Activated CD8-positive, alpha-beta memory T cell treated with anti-CD3 and anti-CD28 coated beads, Interleukin-2, amount 10 ng/mL, durations not matched to agents 7 days and 5 days (primary cell): ENCODE measurements at regions of chr22 and their contacts with region 1.

Region 1: GRCh38 chr22:23849009-23850006 is 8.4 kb upstream of the SLC2A11 start:
- DNase-seq: peak; percentile 89
- ATAC-seq: peak; percentile 96
- H3K4me3 Mint-ChIP-seq: no peak overlapping the region
- H3K27ac Mint-ChIP-seq: no peak overlapping the region
- H3K4me1 Mint-ChIP-seq: peaks cover 28% of the 10 kb centered on the region
- H3K27me3 Mint-ChIP-seq: peaks cover 14% of the 10 kb centered on the region

Region 2: GRCh38 chr22:23632178-23632577 is 217.1 kb before region 1 on chr22 and contains the start of gene DRICH1:
- CTCF ChIA-PET with region 1: interaction called, 10 read pairs
- DNase-seq: peak; percentile 68
- ATAC-seq: peak; percentile 70
- H3K4me3 Mint-ChIP-seq: no peak within 1 kb of the TSS
- H3K27ac Mint-ChIP-seq: peak within 1 kb of the TSS; percentile 49
- H3K4me1 Mint-ChIP-seq: peaks cover 11% of the 10 kb centered on the region
- H3K27me3 Mint-ChIP-seq: no peaks in the 10 kb centered on the region
- total RNA-seq, gene DRICH1: 0.23 TPM in 1 of 2 experiments, not detected in the other

Region 3: DNA sequence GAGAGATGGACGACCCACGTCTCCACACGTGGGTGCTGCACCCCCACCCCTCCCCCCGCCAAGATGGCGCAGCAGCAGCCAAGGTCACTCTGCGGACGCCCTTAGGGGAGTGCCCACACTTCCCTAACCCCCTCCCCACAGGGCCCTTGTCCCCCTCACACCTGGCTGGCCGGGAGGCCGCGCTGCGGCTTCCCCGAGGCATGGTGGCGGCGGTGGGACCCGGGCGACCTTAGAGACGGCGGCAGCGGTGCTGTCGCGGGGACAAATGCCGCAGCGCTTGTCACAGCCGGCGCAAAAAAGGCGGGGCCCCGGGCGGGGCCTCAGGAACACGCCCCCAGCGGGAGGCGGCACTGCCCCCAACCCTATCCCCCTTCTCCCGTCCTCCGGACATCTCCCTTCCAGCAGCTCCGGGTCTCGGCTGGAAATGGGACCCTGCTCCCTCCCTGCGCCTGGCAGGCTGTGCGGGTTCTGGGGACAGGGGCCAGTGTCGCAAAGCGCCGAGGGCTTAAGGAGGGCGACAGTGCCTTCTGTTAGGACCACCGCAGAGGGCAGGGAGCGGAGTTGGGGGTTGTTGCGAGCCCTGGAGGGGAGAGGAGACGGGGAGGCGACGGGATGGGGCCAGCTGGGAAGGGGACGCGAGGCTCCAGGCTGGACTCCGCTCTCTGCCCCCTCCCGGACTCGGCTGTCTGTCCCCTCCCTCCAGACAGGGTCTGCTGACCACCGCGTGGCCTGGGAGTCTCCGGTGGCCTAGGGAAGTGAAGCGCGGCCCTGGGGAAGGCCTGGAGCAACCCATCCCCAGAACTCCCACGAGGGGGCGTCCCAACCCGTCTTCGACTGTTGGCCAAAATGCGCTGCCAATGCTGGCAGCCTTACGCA is 81.4 kb before region 1 on chr22 and contains the start of gene CHCHD10:
- CTCF ChIA-PET with region 1: interaction called, 95 read pairs
- DNase-seq: peak; percentile 85
- ATAC-seq: peak; percentile 71
- H3K4me3 Mint-ChIP-seq: peak within 1 kb of the TSS; percentile 75
- H3K27ac Mint-ChIP-seq: peak within 1 kb of the TSS; percentile 75
- H3K4me1 Mint-ChIP-seq: peaks cover 53% of the 10 kb centered on the region
- H3K27me3 Mint-ChIP-seq: no peaks in the 10 kb centered on the region
- total RNA-seq, gene CHCHD10: 155 to 159 TPM

Region 4: DNA sequence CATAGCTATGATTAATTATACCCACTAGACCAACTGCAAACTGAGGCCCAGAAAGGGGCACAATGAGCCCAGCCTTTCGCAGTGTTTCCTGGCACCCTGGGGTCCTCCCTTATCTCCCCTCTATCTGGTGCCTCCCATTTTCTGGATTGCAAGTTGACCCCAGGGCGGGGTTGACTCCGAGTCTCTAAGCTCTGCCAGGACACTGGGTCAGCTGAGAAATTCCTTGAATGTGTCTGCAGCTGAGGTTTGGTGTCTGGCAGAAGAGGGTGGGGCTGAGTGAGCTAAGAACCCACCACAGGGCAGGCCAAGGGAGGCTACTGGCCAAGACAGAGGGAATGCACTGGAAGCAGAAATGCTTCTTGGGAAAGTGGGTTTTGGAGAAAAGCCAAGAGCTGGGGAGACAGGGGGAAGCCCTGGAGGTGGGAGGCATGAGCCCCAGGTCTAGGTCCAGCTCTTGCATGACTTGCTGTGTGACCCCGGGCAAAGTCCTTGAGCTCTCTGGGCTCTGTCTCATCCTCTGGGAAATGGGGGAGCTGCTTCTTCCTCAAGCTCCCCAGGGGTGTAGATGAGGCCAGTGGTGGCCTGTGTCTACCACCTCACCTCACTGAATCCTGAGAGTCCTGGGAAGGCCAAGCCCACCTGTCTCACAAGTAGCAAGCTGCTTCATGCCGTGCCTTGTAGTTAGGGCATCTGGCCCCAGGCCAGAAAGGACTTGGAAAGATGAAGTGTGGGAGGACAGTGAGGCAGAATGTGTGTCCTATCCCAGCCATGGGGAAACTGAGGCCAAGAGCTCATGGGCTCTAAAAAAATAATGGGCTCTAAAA is 74.4 kb before region 1 on chr22:
- CTCF ChIA-PET with region 1: interaction called, 95 read pairs
- DNase-seq: no peak
- ATAC-seq: no peak
- H3K4me3 Mint-ChIP-seq: no peak overlapping the region
- H3K27ac Mint-ChIP-seq: no peak overlapping the region
- H3K4me1 Mint-ChIP-seq: peaks cover 18% of the 10 kb centered on the region
- H3K27me3 Mint-ChIP-seq: peaks cover 7% of the 10 kb centered on the region

Region 5: GRCh38 chr22:23820748-23821211 is 28.5 kb before region 1 on chr22:
- CTCF ChIA-PET with region 1: interaction called, 19 read pairs
- DNase-seq: peak; percentile 90
- ATAC-seq: peak; percentile 95
- H3K4me3 Mint-ChIP-seq: peak overlapping the region; percentile 52
- H3K27ac Mint-ChIP-seq: peak overlapping the region; percentile 92
- H3K4me1 Mint-ChIP-seq: peaks cover 59% of the 10 kb centered on the region
- H3K27me3 Mint-ChIP-seq: no peaks in the 10 kb centered on the region

Region 6: DNA sequence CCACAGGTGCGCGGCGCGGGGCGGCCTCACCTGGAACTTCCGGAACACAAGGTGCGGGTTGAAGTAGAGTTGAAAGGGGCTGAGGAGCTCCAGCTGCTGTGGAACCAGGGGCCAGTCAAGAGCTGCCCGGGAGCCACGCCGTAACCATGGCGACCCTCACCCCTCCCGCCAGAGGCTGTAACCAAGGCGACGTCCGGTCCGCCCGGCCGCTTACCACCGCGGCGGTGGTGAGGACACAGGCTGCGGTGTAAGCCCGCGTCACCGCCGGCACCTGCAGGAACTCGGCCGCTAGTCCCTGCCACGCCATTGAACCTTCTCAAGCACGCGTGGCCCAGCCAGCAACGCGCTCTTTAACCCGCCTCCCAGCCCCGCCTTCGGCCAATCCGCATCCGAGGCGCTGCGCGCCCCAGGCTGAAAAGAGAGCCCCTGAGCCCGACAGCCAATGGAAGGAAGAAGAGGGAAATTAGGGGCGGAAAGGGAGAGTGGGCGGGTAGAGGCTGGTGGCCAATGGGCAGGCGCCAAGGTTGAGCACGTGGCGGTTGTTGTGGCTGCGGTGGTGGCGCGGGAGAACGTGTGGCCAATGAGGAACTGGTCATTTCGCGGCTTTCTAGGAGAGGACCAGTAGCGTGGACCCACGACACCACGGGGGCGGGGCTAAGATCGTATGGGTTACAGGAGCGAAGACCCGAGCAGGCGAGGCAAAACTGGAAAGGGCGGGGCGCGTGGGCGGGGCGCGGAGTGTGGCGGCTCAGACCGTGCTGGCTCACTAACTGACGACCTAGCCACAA is 10.4 kb before region 1 on chr22 and contains the start of gene DERL3:
- CTCF ChIA-PET with region 1: interaction called, 15 read pairs
- DNase-seq: peak; percentile 99
- ATAC-seq: peak; percentile 94
- H3K4me3 Mint-ChIP-seq: peak within 1 kb of the TSS; percentile 82
- H3K27ac Mint-ChIP-seq: peak within 1 kb of the TSS; percentile 89
- H3K4me1 Mint-ChIP-seq: peaks cover 26% of the 10 kb centered on the region
- H3K27me3 Mint-ChIP-seq: peaks cover 4% of the 10 kb centered on the region
- total RNA-seq, gene DERL3: 14.6 to 18.1 TPM

Region 7: DNA sequence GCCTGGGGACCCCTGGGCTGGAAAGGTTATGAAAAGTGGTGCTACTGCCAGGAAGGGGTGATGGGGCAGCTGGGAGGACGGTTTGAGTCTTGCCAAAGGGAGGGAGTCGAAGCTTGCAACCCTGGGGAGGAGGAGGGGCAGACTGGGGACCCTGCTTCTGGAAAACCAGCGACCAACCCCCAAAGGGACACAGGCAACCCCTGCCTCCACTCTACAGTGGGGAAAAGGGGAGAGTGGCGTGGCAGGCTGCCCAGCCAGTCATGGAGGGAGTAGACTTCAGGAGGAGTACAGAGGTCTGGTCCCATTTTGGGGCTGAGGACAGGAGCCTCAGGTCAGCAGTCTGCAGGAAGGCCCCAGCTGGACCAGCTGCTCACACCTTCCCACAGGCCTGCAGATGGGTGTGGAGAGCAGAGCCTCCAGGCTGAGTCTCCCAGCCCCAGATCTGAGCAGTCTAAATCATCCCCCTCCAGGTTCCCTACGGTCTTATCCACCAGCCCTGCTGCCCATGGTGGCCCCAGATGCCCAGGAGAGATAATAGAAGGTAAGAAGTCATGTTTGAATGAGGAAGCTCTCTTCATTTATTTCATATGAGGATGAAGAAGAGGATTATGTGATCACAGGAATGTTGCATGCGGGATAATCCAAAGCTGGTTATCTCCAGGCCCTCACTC is 121.6 kb after region 1 on chr22:
- CTCF ChIA-PET with region 1: no interaction called
- DNase-seq: no peak
- ATAC-seq: no peak
- H3K4me3 Mint-ChIP-seq: no peak overlapping the region
- H3K27ac Mint-ChIP-seq: no peak overlapping the region
- H3K4me1 Mint-ChIP-seq: peaks cover 11% of the 10 kb centered on the region
- H3K27me3 Mint-ChIP-seq: no peaks in the 10 kb centered on the region